ENCODE measurements at regions of chr5 and their contacts with region 1.

Region 1: DNA sequence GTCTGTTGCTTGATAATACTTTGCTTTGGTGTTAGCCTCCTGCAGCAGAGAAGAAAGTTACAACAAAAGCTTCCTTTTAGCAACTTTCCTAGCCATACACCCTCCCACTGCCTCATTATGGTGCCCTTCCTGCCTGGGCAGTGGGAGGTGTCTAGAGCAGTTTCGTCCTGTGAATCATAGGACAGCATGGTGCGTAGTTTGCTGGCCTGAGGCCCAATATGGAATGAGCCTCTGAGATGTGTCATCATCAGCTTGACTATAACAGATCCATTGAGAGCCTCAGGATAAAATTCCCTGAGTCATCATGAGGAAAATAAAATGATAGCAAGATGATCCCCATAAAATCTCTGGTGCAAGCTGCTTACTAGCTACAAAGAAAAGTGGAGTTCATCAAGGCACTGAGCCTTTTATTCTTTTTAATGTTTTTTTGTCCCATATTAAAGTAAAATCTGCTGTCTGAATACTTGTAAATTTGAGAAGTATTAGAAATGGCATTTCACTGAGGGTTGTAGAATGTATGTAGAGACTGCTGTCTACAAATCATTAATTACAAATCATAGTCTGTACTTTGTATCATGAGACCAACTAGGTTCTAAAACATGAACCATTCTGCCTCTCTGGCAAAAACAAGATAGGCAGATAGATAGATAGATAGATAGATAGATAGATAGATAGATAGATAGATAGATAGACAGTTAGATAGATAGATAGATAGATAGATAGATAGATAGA is 303.0 kb upstream of the PDE4D start:
- DNase-seq: peak; percentile 97
- H3K4me3 Mint-ChIP-seq: no peak overlapping the region
- H3K27ac Mint-ChIP-seq: no peak overlapping the region
- H3K4me1 Mint-ChIP-seq: peaks cover 10% of the 10 kb centered on the region
- H3K27me3 Mint-ChIP-seq: peaks cover 43% of the 10 kb centered on the region
- CTCF ChIP-seq: no peak

Region 2: GRCh38 chr5:60870857-60871256 is 674.3 kb after region 1 on chr5:
- CTCF ChIA-PET with region 1: no interaction called
- POLR2A ChIA-PET with region 1: no interaction called
- intact Hi-C with region 1: loop called (anchors 10 kb)
- DNase-seq: no peak
- H3K4me3 Mint-ChIP-seq: no peak overlapping the region
- H3K27ac Mint-ChIP-seq: no peak overlapping the region
- H3K4me1 Mint-ChIP-seq: no peaks in the 10 kb centered on the region
- H3K27me3 Mint-ChIP-seq: no peaks in the 10 kb centered on the region
- CTCF ChIP-seq: no peak